B cell (primary cell): ENCODE measurements at regions of chr1 and their contacts with region 1.

Region 1: DNA sequence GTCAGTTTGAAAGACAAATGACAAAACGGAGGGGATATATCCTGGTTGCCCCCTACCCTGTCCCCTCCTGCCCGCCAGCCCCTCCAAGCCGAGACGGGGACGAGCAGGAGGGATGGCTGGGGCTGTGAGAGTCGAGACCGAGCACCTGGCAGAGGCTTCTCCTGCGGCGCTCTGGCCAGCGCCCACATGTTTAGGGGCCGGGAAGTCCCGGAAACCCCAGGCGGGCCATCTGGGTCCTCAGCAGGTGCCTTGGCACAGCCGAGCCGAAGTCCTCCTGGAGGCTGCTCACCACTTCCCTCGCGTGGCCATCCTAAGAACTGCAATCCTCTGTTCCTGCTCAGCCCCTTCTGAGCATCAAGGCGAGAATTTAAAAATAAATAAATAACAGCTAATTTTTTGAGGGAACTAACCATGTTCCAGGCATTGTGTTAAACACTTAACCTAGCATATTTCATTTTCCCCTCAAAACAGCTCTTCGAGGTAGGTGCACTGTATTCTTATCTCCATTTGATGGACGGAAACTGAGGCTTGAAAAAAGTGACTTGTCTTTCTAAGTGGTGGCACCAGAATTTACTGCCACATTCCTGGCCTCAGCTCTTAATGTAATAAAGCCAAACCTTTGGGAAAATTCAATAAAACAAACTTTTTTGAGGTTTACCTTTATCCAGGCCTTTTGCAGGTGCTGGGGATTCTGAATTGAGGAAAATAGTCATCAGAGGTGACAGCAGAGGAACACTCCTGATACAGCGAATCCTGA is 3.5 kb upstream of the RIMS3 start:
- DNase-seq: peak; percentile 90
- ATAC-seq: peak; percentile 71
- H3K4me3 ChIP-seq: peak overlapping the region in 4 of 5 experiments; percentile 28 to 69 (median 40)
- H3K4me3 Mint-ChIP-seq: peak overlapping the region; percentile 71
- H3K27ac ChIP-seq: no peak overlapping the region
- H3K27ac Mint-ChIP-seq: peak overlapping the region; percentile 20
- H3K4me1 ChIP-seq: peaks cover 12 to 27% of the 10 kb centered on the region in 2 donors
- H3K4me1 Mint-ChIP-seq: peaks cover 23% of the 10 kb centered on the region
- H3K27me3 ChIP-seq: no peaks in the 10 kb centered on the region
- H3K27me3 Mint-ChIP-seq: peaks cover 5% of the 10 kb centered on the region
- CTCF ChIP-seq: peak; percentile 94

Region 2: DNA sequence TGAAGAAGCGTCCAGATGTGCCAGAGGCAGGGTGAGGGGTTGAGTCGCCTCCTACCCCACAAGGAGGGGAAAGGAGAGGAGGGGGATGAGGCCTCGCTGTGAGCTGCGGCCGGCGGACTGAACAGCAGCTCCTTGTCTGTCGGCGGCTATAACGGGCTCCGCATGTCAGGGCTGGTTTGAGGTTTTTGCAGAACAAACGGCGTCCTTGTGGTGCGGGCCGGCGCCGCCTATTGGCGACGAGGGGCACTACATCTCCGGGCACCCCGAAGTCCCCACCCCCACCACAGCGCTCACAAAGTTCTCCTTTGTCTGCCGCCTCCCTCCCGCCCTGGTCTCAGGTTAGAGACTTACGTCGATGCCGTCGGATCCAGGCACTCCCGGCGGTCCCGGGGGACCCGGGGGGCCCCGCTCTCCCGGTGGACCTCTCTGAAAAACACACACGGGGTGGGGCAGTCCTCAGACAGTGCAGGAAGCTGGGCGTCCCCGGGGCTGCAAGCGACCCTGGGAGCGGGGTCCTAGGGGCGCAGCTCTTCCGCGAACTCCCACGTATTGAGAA is 353.6 kb before region 1 on chr1:
- CTCF ChIA-PET with region 1: no interaction called
- POLR2A ChIA-PET with region 1: no interaction called
- intact Hi-C with region 1: no loop called
- DNase-seq: peak; percentile 94
- ATAC-seq: peak; percentile 61
- H3K4me3 ChIP-seq: peak overlapping the region; percentile 43 to 78 (median 66)
- H3K4me3 Mint-ChIP-seq: peak overlapping the region; percentile 92
- H3K27ac ChIP-seq: peak overlapping the region in 1 of 2 donors; percentile 40
- H3K27ac Mint-ChIP-seq: peak overlapping the region; percentile 76
- H3K4me1 ChIP-seq: peaks cover 41 to 59% of the 10 kb centered on the region in 2 donors
- H3K4me1 Mint-ChIP-seq: peaks cover 57% of the 10 kb centered on the region
- H3K27me3 ChIP-seq: peaks cover 0 to 3% (median 1%) of the 10 kb centered on the region in 4 experiments
- H3K27me3 Mint-ChIP-seq: peaks cover 5% of the 10 kb centered on the region
- CTCF ChIP-seq: peak; percentile 95

Region 3: GRCh38 chr1:40385437-40386358 is 283.2 kb before region 1 on chr1:
- CTCF ChIA-PET with region 1: no interaction called
- POLR2A ChIA-PET with region 1: no interaction called
- intact Hi-C with region 1: no loop called
- DNase-seq: peak; percentile 94
- ATAC-seq: peak; percentile 73
- H3K4me3 ChIP-seq: peak overlapping the region; percentile 30 to 70 (median 31)
- H3K4me3 Mint-ChIP-seq: peak overlapping the region; percentile 87
- H3K27ac ChIP-seq: peak overlapping the region; percentile 99 to 100
- H3K27ac Mint-ChIP-seq: peak overlapping the region; percentile 97
- H3K4me1 ChIP-seq: peaks cover 94 to 98% of the 10 kb centered on the region in 2 donors
- H3K4me1 Mint-ChIP-seq: peaks cover 91% of the 10 kb centered on the region
- H3K27me3 ChIP-seq: no peaks in the 10 kb centered on the region
- H3K27me3 Mint-ChIP-seq: no peaks in the 10 kb centered on the region
- CTCF ChIP-seq: no peak

Region 4: DNA sequence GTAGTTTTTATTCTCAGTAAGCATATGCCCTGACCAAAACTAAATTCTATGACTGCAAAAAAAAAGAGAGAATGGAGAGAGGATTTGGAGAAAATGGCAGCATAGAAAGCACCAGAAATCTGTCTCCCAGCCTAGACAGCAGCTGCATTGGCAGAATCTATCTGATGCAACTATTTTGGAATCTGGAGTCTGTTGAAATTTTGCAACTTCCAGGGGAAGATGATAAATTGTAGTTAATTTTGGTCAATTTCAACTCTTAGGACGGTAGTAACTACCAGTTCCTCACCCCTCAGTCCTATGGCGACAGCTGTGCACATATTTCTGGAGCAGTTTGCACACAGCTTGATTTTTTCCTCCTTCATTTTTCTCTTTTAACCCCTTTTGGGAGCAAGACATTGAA is 149.4 kb before region 1 on chr1:
- CTCF ChIA-PET with region 1: no interaction called
- POLR2A ChIA-PET with region 1: no interaction called
- intact Hi-C with region 1: no loop called
- DNase-seq: no peak
- ATAC-seq: no peak
- H3K4me3 ChIP-seq: no peak overlapping the region
- H3K4me3 Mint-ChIP-seq: no peak overlapping the region
- H3K27ac ChIP-seq: no peak overlapping the region
- H3K27ac Mint-ChIP-seq: no peak overlapping the region
- H3K4me1 ChIP-seq: no peaks in the 10 kb centered on the region
- H3K4me1 Mint-ChIP-seq: no peaks in the 10 kb centered on the region
- H3K27me3 ChIP-seq: no peaks in the 10 kb centered on the region
- H3K27me3 Mint-ChIP-seq: peaks cover 5% of the 10 kb centered on the region
- CTCF ChIP-seq: no peak

Region 5: DNA sequence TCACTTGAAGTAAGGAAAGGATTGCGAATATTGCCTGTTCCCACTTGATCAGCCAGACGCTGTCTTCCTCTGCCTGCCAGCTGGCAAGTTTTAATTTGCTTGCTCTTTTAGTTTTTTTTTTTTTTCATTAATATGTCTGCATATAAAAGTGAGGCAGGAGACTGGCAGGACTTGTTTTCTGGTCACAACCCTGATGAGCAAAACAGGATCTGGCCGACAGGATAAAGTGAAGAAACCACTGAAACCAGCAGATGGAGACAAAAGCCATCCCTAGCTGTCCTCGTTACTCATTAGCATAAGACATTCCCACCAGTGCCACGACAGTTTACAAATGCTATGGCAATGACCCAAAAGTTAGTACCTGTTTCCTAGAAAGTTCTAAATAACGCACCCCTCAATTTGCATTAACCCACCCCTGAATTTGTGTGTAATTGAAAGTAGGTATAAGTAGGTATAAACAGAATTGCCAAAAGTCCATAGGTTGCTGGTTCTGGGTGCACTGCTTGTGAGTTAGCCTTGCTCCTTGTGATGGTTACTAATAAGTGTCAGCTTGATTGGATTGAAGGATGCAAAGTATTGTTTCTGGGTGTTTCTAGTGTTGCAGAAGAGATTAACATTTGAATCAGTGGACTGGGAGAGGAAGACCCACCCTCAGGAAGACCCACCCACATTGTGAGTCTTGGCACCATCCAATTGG is 76.7 kb before region 1 on chr1:
- CTCF ChIA-PET with region 1: no interaction called
- POLR2A ChIA-PET with region 1: no interaction called
- intact Hi-C with region 1: no loop called
- DNase-seq: peak; percentile 40
- ATAC-seq: no peak
- H3K4me3 ChIP-seq: no peak overlapping the region
- H3K4me3 Mint-ChIP-seq: no peak overlapping the region
- H3K27ac ChIP-seq: no peak overlapping the region
- H3K27ac Mint-ChIP-seq: no peak overlapping the region
- H3K4me1 ChIP-seq: no peaks in the 10 kb centered on the region
- H3K4me1 Mint-ChIP-seq: peaks cover 4% of the 10 kb centered on the region
- H3K27me3 ChIP-seq: peaks cover 0 to 2% (median 0%) of the 10 kb centered on the region in 4 experiments
- H3K27me3 Mint-ChIP-seq: peaks cover 14% of the 10 kb centered on the region
- CTCF ChIP-seq: peak; percentile 39

Region 6: GRCh38 chr1:40612345-40612831 is 56.6 kb before region 1 on chr1:
- CTCF ChIA-PET with region 1: interaction called, 5 read pairs
- POLR2A ChIA-PET with region 1: no interaction called
- intact Hi-C with region 1: loop called (anchors 1 kb)
- DNase-seq: peak; percentile 81
- ATAC-seq: peak; percentile 91
- H3K4me3 ChIP-seq: no peak overlapping the region
- H3K4me3 Mint-ChIP-seq: no peak overlapping the region
- H3K27ac ChIP-seq: no peak overlapping the region
- H3K27ac Mint-ChIP-seq: no peak overlapping the region
- H3K4me1 ChIP-seq: peaks cover 0 to 2% of the 10 kb centered on the region in 2 donors
- H3K4me1 Mint-ChIP-seq: no peaks in the 10 kb centered on the region
- H3K27me3 ChIP-seq: no peaks in the 10 kb centered on the region
- H3K27me3 Mint-ChIP-seq: peaks cover 3% of the 10 kb centered on the region
- CTCF ChIP-seq: peak; percentile 91

Region 7: DNA sequence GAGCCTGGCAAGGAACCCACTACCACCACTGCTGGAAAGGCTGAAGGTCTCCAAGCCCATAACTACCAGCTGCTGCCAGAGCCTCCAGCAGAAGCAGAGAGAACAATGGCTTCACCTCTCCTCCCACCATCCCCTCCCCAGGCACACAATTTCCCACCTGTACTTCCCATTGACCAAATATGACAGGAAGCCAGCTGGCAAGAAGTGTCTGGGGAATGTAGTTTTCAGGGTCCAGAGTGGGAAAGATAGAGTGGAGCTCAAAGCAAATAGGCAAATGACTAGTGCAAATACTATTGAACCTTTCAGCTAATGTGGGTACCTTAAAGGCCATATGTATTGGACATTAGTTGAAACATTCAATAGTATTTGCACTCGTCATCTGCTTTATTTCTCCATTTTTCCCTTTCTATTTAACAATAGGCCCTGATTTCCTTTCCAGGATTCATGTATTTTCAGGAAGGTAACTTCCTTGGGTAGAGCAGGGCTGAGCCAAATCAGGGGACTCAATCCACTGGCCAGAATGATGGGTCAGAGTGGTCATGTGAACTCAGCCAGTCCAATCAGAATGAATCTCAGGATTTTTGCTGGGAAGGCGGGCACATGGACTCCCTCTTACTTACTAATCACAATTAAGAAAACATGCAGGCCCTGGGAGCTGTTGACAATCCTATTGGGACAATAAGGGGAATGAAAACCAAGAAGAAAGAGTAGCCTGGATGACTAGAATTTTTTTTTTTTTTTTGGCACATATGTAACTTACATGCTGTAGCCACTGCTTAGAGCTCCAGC is 10.4 kb after region 1 on chr1:
- CTCF ChIA-PET with region 1: interaction called, 14 read pairs
- POLR2A ChIA-PET with region 1: no interaction called
- intact Hi-C with region 1: no loop called
- DNase-seq: no peak
- ATAC-seq: no peak
- H3K4me3 ChIP-seq: no peak overlapping the region
- H3K4me3 Mint-ChIP-seq: no peak overlapping the region
- H3K27ac ChIP-seq: no peak overlapping the region
- H3K27ac Mint-ChIP-seq: no peak overlapping the region
- H3K4me1 ChIP-seq: no peaks in the 10 kb centered on the region
- H3K4me1 Mint-ChIP-seq: no peaks in the 10 kb centered on the region
- H3K27me3 ChIP-seq: no peaks in the 10 kb centered on the region
- H3K27me3 Mint-ChIP-seq: peaks cover 3% of the 10 kb centered on the region
- CTCF ChIP-seq: no peak

Region 8: DNA sequence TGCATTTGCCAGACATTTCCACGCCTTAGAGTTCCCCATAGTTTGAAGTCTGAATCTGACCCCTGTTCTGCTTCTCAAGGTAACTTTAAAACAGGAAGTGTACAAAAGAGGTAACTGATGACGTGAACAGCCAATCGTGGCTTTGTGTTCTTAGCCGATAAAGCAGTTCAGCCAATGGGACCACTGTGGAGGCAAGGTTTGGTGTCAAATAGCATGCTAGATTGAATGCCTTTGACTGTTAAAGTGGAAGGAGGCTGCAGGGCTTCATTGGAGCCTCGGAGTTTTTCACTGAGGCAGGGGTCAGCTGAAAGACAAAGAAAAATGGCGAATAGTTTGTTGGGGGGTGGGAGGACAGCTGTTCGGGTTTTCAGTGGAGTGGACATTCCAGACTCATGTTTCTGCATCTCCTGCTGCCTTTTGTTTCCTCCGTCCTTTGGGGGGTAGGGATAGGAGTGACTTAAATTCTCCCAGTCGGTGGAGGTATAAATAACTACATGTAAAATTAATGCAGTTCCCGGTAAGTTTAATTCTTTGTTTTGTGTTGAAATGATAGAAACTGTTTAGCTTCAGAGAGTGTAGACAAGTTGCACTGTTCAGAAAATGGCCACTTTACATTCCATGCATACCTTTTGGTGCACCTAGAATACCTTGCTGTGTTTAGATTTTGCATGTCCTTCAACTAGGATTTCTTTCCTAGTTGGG is 40.3 kb after region 1 on chr1:
- CTCF ChIA-PET with region 1: interaction called, 5 read pairs
- POLR2A ChIA-PET with region 1: no interaction called
- intact Hi-C with region 1: loop called (anchors 1 kb)
- DNase-seq: peak; percentile 92
- ATAC-seq: peak; percentile 90
- H3K4me3 ChIP-seq: peak overlapping the region; percentile 55 to 88 (median 76)
- H3K4me3 Mint-ChIP-seq: peak overlapping the region; percentile 96
- H3K27ac ChIP-seq: peak overlapping the region; percentile 87 to 94
- H3K27ac Mint-ChIP-seq: peak overlapping the region; percentile 96
- H3K4me1 ChIP-seq: peaks cover 58 to 64% of the 10 kb centered on the region in 2 donors
- H3K4me1 Mint-ChIP-seq: peaks cover 74% of the 10 kb centered on the region
- H3K27me3 ChIP-seq: no peaks in the 10 kb centered on the region
- H3K27me3 Mint-ChIP-seq: no peaks in the 10 kb centered on the region
- CTCF ChIP-seq: no peak

Region 9: GRCh38 chr1:40849801-40850592 is 181.1 kb after region 1 on chr1:
- CTCF ChIA-PET with region 1: interaction called, 13 read pairs
- POLR2A ChIA-PET with region 1: no interaction called
- intact Hi-C with region 1: no loop called
- DNase-seq: peak; percentile 85
- ATAC-seq: peak; percentile 98
- H3K4me3 ChIP-seq: no peak overlapping the region
- H3K4me3 Mint-ChIP-seq: peak overlapping the region; percentile 35
- H3K27ac ChIP-seq: no peak overlapping the region
- H3K27ac Mint-ChIP-seq: no peak overlapping the region
- H3K4me1 ChIP-seq: peaks cover 8% of the 10 kb centered on the region in 2 donors
- H3K4me1 Mint-ChIP-seq: peaks cover 11% of the 10 kb centered on the region
- H3K27me3 ChIP-seq: no peaks in the 10 kb centered on the region
- H3K27me3 Mint-ChIP-seq: peaks cover 5% of the 10 kb centered on the region
- CTCF ChIP-seq: peak; percentile 98